Upper lobe of right lung (tissue), 1 donor: ENCODE measurements at regions of chr9 and their contacts with region 1.

Region 1: DNA sequence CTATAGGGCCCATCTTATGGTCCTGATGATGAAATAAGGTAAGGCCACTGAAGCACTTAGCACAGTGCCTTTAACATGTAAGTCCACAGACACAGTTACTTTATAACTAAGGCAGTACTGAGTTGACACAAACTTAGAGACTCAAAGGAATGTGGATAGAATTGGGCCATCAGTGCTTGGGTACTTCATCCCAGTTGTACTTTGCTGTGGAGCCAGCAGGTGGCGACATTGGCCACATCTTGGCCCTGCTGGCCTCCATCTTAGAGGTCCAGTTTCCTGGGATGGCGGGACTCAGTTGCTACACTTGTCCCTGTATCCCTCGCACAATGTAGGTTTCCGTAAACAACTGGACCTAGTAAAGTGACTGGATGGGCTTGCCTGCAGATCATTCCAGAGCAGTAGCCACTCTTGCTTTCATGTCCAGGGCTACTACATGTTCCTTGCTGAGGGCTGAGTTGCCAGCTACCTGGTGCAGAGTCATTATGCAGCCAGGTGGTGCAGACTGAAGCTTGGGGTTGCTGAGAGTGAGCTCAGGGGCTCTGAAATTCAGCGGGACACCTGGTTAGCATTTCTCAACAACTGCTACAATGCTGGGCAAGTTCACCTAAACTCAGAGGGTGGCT is 10.6 kb downstream of the MTAP start:
- DNase-seq: peak; percentile 83
- ATAC-seq: peak; percentile 91
- H3K4me3 ChIP-seq: no peak overlapping the region
- H3K27ac ChIP-seq: no peak overlapping the region
- H3K4me1 ChIP-seq: peaks cover 11% of the 10 kb centered on the region
- H3K27me3 ChIP-seq: no peaks in the 10 kb centered on the region
- CTCF ChIP-seq: peak; percentile 92

Region 2: GRCh38 chr9:21715408-21715807 is 97.6 kb before region 1 on chr9:
- intact Hi-C with region 1: no loop called
- DNase-seq: no peak
- ATAC-seq: no peak
- H3K4me3 ChIP-seq: no peak overlapping the region
- H3K27ac ChIP-seq: no peak overlapping the region
- H3K4me1 ChIP-seq: no peaks in the 10 kb centered on the region
- H3K27me3 ChIP-seq: peaks cover 14% of the 10 kb centered on the region
- CTCF ChIP-seq: no peak

Region 3: GRCh38 chr9:21985964-21986667 is 173.1 kb after region 1 on chr9:
- intact Hi-C with region 1: no loop called
- DNase-seq: no peak
- ATAC-seq: no peak
- H3K4me3 ChIP-seq: no peak overlapping the region
- H3K27ac ChIP-seq: no peak overlapping the region
- H3K4me1 ChIP-seq: no peaks in the 10 kb centered on the region
- H3K27me3 ChIP-seq: peaks cover 76% of the 10 kb centered on the region
- CTCF ChIP-seq: no peak

Region 4: DNA sequence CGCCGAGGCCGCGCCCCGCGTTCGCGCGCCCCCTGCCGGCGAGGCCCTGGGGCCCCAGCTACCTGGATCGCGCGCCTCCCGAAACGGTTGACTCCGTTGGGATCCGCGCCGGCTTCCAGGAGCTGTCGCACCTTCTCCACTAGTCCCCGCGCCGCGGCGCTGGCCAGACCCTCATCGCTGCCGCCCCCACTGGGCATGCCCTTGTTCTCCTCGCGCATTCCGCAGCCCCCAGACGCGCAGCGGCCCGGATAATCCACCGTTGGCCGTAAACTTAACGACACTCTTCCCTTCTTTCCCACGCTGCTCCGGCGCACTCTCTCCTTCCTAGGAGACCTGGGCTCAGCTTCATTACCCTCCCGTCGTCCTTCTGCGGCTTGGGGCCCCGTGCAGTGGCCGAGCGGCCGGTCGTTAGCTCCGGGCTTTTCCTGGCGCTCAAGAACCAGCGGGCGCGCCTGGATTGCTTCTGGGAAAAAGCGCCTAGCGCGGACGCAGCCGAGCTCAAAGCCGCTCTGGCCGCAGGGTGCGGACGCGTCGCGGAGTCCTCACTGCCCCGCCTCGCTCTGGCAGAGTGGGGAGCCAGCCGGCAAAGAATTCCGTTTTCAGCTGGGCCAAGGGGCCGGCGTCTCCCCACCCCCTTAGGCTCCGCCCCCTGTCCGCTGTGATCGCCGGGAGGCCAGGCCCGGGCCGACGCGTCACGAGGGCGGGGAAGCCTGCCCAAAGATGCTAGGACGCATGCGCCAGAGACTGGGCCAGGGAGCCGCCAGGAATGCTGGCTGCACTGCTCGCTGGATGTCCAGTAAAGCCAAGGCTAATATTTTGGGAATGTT is 195.9 kb after region 1 on chr9 and contains the start of gene CDKN2B:
- intact Hi-C with region 1: loop called (anchors 10 kb)
- DNase-seq: peak; percentile 98
- ATAC-seq: peak; percentile 98
- H3K4me3 ChIP-seq: peak within 1 kb of the TSS; percentile 59
- H3K27ac ChIP-seq: peak within 1 kb of the TSS; percentile 81
- H3K4me1 ChIP-seq: peaks cover 4% of the 10 kb centered on the region
- H3K27me3 ChIP-seq: peaks cover 22% of the 10 kb centered on the region
- CTCF ChIP-seq: peak; percentile 96
- total RNA-seq, gene CDKN2B: 31.3 TPM

Region 5: GRCh38 chr9:22111954-22112247 is 298.8 kb after region 1 on chr9:
- intact Hi-C with region 1: no loop called
- DNase-seq: no peak
- ATAC-seq: no peak
- H3K4me3 ChIP-seq: no peak overlapping the region
- H3K27ac ChIP-seq: no peak overlapping the region
- H3K4me1 ChIP-seq: no peaks in the 10 kb centered on the region
- H3K27me3 ChIP-seq: no peaks in the 10 kb centered on the region
- CTCF ChIP-seq: no peak

Region 6: GRCh38 chr9:22244141-22245011 is 431.3 kb after region 1 on chr9:
- intact Hi-C with region 1: loop called (anchors 5 kb)
- DNase-seq: peak; percentile 60
- ATAC-seq: peak; percentile 82
- H3K4me3 ChIP-seq: peak overlapping the region; percentile 17
- H3K27ac ChIP-seq: no peak overlapping the region
- H3K4me1 ChIP-seq: no peaks in the 10 kb centered on the region
- H3K27me3 ChIP-seq: no peaks in the 10 kb centered on the region
- CTCF ChIP-seq: peak; percentile 49